ENCODE measurements at regions of chr11 and their contacts with region 1.

Region 1: DNA sequence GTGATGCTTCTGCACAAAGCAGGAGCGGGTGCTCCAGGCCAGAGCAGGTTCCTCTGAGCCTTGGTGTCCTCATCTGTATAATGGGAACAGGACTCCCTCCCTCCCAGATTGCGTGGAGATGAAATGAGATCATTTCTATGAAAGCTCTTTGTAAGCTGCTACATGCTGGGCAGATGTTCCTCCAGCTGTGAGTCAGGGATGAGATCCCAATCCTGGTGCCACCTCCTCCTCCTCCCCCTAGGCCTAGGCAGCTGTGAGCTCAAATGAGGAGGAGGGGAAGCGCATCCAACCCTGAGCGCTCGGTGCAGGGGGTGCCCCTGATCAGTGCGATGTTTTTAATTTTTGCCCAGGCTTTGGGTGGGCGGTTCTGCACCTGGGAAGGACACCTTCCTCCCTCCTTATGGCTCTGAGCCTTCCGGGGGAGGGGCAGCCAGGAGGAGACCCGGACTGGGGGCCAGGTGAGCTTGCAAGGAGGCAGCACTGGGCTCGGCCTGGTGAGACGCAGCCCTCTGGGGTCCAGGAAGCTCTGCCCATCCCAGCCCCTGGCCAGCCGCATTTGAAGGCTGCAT is 7.1 kb upstream of the CABP2 start:
- DNase-seq: no peak
- CTCF ChIP-seq: no peak

Region 2: DNA sequence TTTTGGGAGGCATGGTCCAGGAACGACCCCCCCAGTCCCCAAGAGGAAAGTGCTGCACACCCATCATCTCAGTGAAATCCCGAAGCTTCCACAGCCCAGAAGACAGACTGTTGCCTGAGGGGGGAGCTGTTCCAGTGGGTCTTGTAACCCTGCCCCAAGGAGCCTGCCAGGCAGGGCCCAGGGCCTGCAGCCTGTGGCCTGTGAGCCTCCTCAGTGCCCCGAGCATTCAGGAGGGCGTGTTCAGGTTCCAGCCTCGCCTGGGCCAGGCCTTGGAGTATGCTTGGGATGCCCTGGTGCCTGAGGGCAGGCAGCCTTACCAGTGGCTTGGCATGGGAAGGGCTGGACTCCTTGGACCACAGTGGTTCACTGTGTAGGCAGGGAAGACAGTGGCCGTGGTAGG is 10.8 kb after region 1 on chr11:
- CTCF ChIA-PET with region 1: interaction called, 10 read pairs
- POLR2A ChIA-PET with region 1: no interaction called
- DNase-seq: no peak
- CTCF ChIP-seq: no peak

Measured in GM10248 (cell line).